ENCODE measurements at regions of chr3 and their contacts with region 1.

Region 1: DNA sequence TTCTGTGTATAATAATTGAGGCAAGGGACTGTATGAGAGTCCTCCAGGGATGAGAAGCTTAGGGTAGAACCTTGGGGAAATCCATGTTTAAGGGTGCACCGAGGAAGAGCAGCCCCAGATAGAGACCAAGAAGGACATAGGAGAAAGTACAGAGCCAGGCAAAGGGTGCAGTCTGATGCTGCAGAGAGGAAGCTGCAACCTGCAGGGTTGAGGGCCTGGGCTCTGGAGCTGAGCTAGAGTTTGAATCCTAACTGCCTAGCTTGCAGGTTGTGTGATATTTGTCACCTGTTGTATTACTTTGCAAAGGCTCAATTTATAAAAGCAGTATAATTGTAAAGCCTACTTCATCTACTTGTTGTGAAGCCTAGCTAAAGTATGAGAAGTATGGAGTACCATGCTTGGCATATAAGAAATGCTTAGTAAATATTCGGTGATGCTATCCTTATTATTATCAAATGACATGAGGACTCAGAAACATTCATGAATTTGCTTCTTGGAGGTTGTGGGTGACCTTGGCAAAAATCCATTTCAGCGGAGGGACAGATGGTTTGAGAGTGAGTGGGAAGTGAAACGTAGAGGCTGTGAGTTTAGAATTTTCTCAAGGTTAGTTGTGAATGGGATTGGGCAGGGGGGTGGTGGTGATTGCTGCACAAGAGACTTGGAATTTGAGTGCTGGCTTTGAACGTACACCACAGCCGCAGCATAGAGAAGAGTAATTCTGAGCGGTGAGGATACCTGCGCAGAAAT is 43.8 kb downstream of the PLCL2 start:
- DNase-seq: no peak
- ATAC-seq: no peak
- H3K4me3 ChIP-seq: no peak overlapping the region
- H3K4me3 Mint-ChIP-seq: no peak overlapping the region
- H3K27ac ChIP-seq: no peak overlapping the region
- H3K27ac Mint-ChIP-seq: peak overlapping the region; percentile 42
- H3K4me1 ChIP-seq: peaks cover 38% of the 10 kb centered on the region
- H3K4me1 Mint-ChIP-seq: peaks cover 83% of the 10 kb centered on the region
- H3K27me3 ChIP-seq: no peaks in the 10 kb centered on the region
- H3K27me3 Mint-ChIP-seq: no peaks in the 10 kb centered on the region
- CTCF ChIP-seq: no peak

Region 2: DNA sequence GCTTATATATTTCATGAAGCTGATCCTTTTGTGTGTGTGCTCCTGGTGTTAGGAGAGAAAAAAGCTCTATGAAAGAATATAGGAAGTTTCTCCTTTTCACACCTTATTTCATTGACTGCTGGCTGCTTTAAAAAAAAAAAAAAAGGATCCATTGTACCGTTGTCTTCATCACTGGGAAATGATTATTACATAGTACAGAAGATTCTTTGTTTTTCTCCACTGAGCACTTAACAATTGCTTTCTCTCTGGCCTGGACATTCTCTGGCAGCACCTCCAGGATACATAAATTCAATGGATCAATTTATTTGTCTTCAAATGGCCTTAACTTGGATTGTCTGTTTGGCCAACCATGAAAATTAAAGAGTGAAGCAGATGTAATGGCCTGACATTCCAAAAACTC is 701.0 kb before region 1 on chr3:
- CTCF ChIA-PET with region 1: no interaction called
- POLR2A ChIA-PET with region 1: no interaction called
- intact Hi-C with region 1: no loop called
- DNase-seq: no peak
- ATAC-seq: no peak
- H3K4me3 ChIP-seq: no peak overlapping the region
- H3K4me3 Mint-ChIP-seq: no peak overlapping the region
- H3K27ac ChIP-seq: no peak overlapping the region
- H3K27ac Mint-ChIP-seq: no peak overlapping the region
- H3K4me1 ChIP-seq: no peaks in the 10 kb centered on the region
- H3K4me1 Mint-ChIP-seq: no peaks in the 10 kb centered on the region
- H3K27me3 ChIP-seq: no peaks in the 10 kb centered on the region
- H3K27me3 Mint-ChIP-seq: no peaks in the 10 kb centered on the region
- CTCF ChIP-seq: no peak

Region 3: DNA sequence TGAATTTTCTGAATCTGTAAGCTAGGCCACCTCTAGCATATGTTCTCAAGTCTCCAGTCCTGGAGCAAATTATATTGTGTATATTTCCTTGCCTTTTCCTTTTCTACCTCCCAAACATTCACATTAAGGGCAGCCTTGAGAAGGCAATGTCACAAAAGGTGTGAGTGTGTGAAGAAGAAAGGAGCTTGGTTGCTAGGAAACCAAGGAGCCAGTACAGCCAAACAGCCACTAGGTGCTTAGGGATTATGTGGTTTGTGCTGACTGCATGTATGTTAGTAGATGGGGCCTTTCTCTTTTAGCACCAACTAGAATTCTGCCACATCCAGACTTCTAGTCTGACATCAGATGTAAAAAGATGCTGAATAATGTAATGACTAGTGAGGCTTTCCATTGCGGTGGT is 204.6 kb before region 1 on chr3:
- CTCF ChIA-PET with region 1: no interaction called
- POLR2A ChIA-PET with region 1: no interaction called
- intact Hi-C with region 1: no loop called
- DNase-seq: peak in 2 of 9 experiments; percentile 21 to 40
- ATAC-seq: no peak
- H3K4me3 ChIP-seq: no peak overlapping the region
- H3K4me3 Mint-ChIP-seq: no peak overlapping the region
- H3K27ac ChIP-seq: no peak overlapping the region
- H3K27ac Mint-ChIP-seq: no peak overlapping the region
- H3K4me1 ChIP-seq: no peaks in the 10 kb centered on the region
- H3K4me1 Mint-ChIP-seq: no peaks in the 10 kb centered on the region
- H3K27me3 ChIP-seq: no peaks in the 10 kb centered on the region
- H3K27me3 Mint-ChIP-seq: no peaks in the 10 kb centered on the region
- CTCF ChIP-seq: no peak

Region 4: GRCh38 chr3:16842272-16843270 is 86.0 kb before region 1 on chr3:
- CTCF ChIA-PET with region 1: no interaction called
- POLR2A ChIA-PET with region 1: no interaction called
- intact Hi-C with region 1: no loop called
- DNase-seq: peak; percentile 48 to 91 (median 77)
- ATAC-seq: peak; percentile 90
- H3K4me3 ChIP-seq: peak overlapping the region; percentile 35 to 42
- H3K4me3 Mint-ChIP-seq: peak overlapping the region; percentile 80
- H3K27ac ChIP-seq: peak overlapping the region; percentile 63 to 89
- H3K27ac Mint-ChIP-seq: peak overlapping the region; percentile 98
- H3K4me1 ChIP-seq: peaks cover 60% of the 10 kb centered on the region
- H3K4me1 Mint-ChIP-seq: peaks cover 81% of the 10 kb centered on the region
- H3K27me3 ChIP-seq: no peaks in the 10 kb centered on the region
- H3K27me3 Mint-ChIP-seq: no peaks in the 10 kb centered on the region
- CTCF ChIP-seq: no peak

Region 5: DNA sequence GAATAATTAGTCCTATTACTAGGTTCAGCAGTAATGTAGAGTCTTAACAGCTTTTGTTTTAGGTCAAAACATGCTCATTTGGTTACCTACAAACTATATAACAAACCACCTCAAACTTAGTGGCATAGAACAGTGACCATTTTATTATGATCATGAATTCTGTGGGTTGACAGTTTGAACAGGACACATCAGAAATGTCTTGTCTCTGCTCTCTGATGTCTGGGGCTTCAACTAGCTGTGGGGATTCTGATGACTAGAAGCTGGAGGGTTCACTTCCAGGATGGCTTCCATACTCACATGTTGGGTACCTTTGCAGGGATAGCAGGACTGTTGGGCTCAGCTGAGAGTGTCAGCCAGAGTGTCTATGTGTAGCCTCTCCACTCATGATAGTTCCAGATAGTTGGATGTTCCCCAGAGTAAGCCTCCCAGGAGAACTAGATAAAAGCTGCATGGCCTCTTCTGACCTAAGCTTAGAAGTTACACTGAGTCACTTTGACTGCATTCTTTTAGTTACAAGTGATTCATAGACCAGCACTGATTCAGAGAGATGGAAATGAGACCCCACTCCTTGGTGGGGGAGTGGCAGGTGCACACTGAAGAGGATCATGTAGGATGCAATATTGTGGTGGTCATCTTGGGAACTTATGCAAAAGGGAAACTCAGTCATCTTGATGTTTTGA is 11.2 kb before region 1 on chr3:
- CTCF ChIA-PET with region 1: no interaction called
- POLR2A ChIA-PET with region 1: no interaction called
- intact Hi-C with region 1: loop called in 1 of 2 experiments (anchors 2 kb)
- DNase-seq: no peak
- ATAC-seq: no peak
- H3K4me3 ChIP-seq: no peak overlapping the region
- H3K4me3 Mint-ChIP-seq: no peak overlapping the region
- H3K27ac ChIP-seq: no peak overlapping the region
- H3K27ac Mint-ChIP-seq: peak overlapping the region; percentile 15
- H3K4me1 ChIP-seq: peaks cover 58% of the 10 kb centered on the region
- H3K4me1 Mint-ChIP-seq: peaks cover 83% of the 10 kb centered on the region
- H3K27me3 ChIP-seq: no peaks in the 10 kb centered on the region
- H3K27me3 Mint-ChIP-seq: no peaks in the 10 kb centered on the region
- CTCF ChIP-seq: no peak

Region 6: GRCh38 chr3:17339132-17339575 is 410.6 kb after region 1 on chr3:
- CTCF ChIA-PET with region 1: no interaction called
- POLR2A ChIA-PET with region 1: no interaction called
- intact Hi-C with region 1: no loop called
- DNase-seq: no peak
- ATAC-seq: no peak
- H3K4me3 ChIP-seq: no peak overlapping the region
- H3K4me3 Mint-ChIP-seq: no peak overlapping the region
- H3K27ac ChIP-seq: no peak overlapping the region
- H3K27ac Mint-ChIP-seq: no peak overlapping the region
- H3K4me1 ChIP-seq: no peaks in the 10 kb centered on the region
- H3K4me1 Mint-ChIP-seq: peaks cover 6% of the 10 kb centered on the region
- H3K27me3 ChIP-seq: no peaks in the 10 kb centered on the region
- H3K27me3 Mint-ChIP-seq: no peaks in the 10 kb centered on the region
- CTCF ChIP-seq: no peak

Measured in CD8-positive, alpha-beta T cell (primary cell).